ENCODE measurements at regions of chr6 and their contacts with region 1.

Region 1: DNA sequence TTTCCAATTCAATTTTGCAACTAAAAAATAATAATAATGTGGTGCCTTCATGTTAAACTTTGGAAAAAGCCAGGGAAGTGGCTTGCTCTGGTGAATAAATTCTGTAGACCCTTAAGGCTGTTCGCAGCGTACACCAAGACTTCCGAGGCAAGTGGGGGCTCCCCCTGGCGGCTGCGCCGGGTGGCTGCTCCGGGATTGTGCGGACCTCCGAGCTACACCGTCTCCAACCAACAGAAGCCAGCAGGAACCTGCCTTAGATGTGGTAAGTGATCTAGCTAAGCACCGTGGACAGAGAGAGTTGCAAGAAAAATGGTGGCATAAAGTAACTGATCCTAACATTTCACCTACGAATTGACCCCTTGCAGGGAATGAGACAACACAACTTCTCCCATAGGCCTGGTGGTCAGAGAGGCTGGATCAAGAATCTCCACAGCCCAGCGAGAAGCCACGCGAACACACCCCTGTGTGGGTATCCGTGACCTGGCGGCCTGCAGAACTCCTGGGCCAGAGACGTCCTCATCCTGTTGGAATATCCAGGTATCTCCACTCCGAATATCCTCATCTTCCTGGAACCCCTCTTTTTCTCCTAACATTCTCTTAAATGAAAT is 69.6 kb downstream of the TBXT start:
- DNase-seq: peak; percentile 79
- H3K4me3 ChIP-seq: peak overlapping the region in 1 of 2 experiments; percentile 55; a peak in 2 of 4 replicates
- H3K27ac ChIP-seq: no peak overlapping the region
- H3K4me1 ChIP-seq: peaks cover 0 to 2% of the 10 kb centered on the region in 2 experiments; a peak in 1 of 4 replicates
- H3K27me3 ChIP-seq: no peaks in the 10 kb centered on the region
- CTCF ChIP-seq: peak; percentile 51
- EP300 ChIP-seq: no peak
- RAD21 ChIP-seq: peak; percentile 75

Region 2: DNA sequence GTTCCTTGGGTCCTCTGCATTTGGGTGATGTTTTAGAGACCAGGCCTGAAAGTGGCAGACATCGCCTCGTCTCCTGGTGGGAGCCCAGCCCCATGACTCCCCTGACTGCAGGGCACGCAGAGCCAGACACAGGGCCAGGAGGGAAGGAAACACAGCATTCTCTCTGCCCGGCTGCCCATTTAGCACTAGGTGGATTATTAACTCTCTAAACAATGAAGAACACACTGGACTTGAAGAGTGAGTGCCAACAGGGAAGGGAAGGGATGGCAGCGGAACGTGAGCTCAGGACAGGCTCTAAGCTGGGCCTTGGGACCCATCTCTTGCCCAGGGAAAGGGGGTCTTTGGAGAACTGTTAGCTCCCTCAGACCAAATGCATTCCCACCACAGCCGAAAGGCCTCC is 10.8 kb before region 1 on chr6:
- CTCF ChIA-PET with region 1: interaction called, 11 read pairs
- POLR2A ChIA-PET with region 1: no interaction called
- DNase-seq: no peak
- H3K4me3 ChIP-seq: no peak overlapping the region
- H3K27ac ChIP-seq: no peak overlapping the region
- H3K4me1 ChIP-seq: no peaks in the 10 kb centered on the region
- H3K27me3 ChIP-seq: no peaks in the 10 kb centered on the region
- CTCF ChIP-seq: no peak
- EP300 ChIP-seq: no peak
- RAD21 ChIP-seq: no peak

Region 3: GRCh38 chr6:166119116-166119911 is 21.3 kb after region 1 on chr6:
- CTCF ChIA-PET with region 1: no interaction called
- POLR2A ChIA-PET with region 1: no interaction called
- DNase-seq: no peak
- H3K4me3 ChIP-seq: peak overlapping the region in 1 of 2 experiments; percentile 23; a peak in 2 of 4 replicates
- H3K27ac ChIP-seq: no peak overlapping the region
- H3K4me1 ChIP-seq: no peaks in the 10 kb centered on the region
- H3K27me3 ChIP-seq: no peaks in the 10 kb centered on the region
- CTCF ChIP-seq: no peak
- EP300 ChIP-seq: no peak
- RAD21 ChIP-seq: no peak

Region 4: GRCh38 chr6:166365221-166365620 is 267.2 kb after region 1 on chr6:
- CTCF ChIA-PET with region 1: no interaction called
- POLR2A ChIA-PET with region 1: no interaction called
- DNase-seq: no peak
- H3K4me3 ChIP-seq: no peak overlapping the region
- H3K27ac ChIP-seq: peak overlapping the region in 1 of 2 experiments; percentile 44; a peak in 2 of 4 replicates
- H3K4me1 ChIP-seq: peaks cover 2 to 14% of the 10 kb centered on the region in 2 experiments; a peak in 2 of 4 replicates
- H3K27me3 ChIP-seq: no peaks in the 10 kb centered on the region
- CTCF ChIP-seq: no peak
- EP300 ChIP-seq: no peak
- RAD21 ChIP-seq: no peak